HCT116 (cell line): ENCODE measurements at regions of chr18 and their contacts with region 1.

Region 1: GRCh38 chr18:8654503-8655451 is 45.5 kb downstream of the RAB12 start:
- DNase-seq: no peak
- ATAC-seq: peak; percentile 27; the same call in 1 of the 2 replicates
- H3K4me3 ChIP-seq: no peak overlapping the region
- H3K27ac ChIP-seq: no peak overlapping the region
- H3K4me1 ChIP-seq: peaks cover 0 to 12% of the 10 kb centered on the region in 2 experiments; a peak in 2 of 4 replicates
- H3K27me3 ChIP-seq: peaks cover 3% of the 10 kb centered on the region; the same call in 1 of the 2 replicates
- CTCF ChIP-seq: peak; percentile 58 to 78 (median 61)
- POLR2A ChIP-seq: no peak
- RAD21 ChIP-seq: peak; percentile 87

Region 2: GRCh38 chr18:8681196-8681595 is 26.4 kb after region 1 on chr18:
- CTCF ChIA-PET with region 1: no interaction called
- POLR2A ChIA-PET with region 1: no interaction called
- RAD21 ChIA-PET with region 1: no interaction called
- intact Hi-C with region 1: no loop called
- DNase-seq: no peak
- ATAC-seq: no peak
- H3K4me3 ChIP-seq: no peak overlapping the region
- H3K27ac ChIP-seq: no peak overlapping the region
- H3K4me1 ChIP-seq: peaks cover 0 to 6% of the 10 kb centered on the region in 2 experiments; a peak in 1 of 4 replicates
- H3K27me3 ChIP-seq: no peaks in the 10 kb centered on the region
- CTCF ChIP-seq: no peak
- POLR2A ChIP-seq: no peak
- RAD21 ChIP-seq: no peak

Region 3: GRCh38 chr18:8816816-8817215 is 162.0 kb after region 1 on chr18:
- CTCF ChIA-PET with region 1: no interaction called
- POLR2A ChIA-PET with region 1: no interaction called
- RAD21 ChIA-PET with region 1: no interaction called
- intact Hi-C with region 1: no loop called
- DNase-seq: no peak
- ATAC-seq: no peak
- H3K4me3 ChIP-seq: no peak overlapping the region
- H3K27ac ChIP-seq: no peak overlapping the region
- H3K4me1 ChIP-seq: no peaks in the 10 kb centered on the region
- H3K27me3 ChIP-seq: no peaks in the 10 kb centered on the region
- CTCF ChIP-seq: no peak
- POLR2A ChIP-seq: no peak
- RAD21 ChIP-seq: no peak

Region 4: GRCh38 chr18:8982416-8983184 is 327.8 kb after region 1 on chr18:
- CTCF ChIA-PET with region 1: interaction called, 38 read pairs
- POLR2A ChIA-PET with region 1: interaction called, 3 read pairs
- RAD21 ChIA-PET with region 1: interaction called, 3 read pairs
- intact Hi-C with region 1: loop called (anchors 1 kb)
- DNase-seq: peak; percentile 63
- ATAC-seq: peak; percentile 97
- H3K4me3 ChIP-seq: no peak overlapping the region
- H3K27ac ChIP-seq: no peak overlapping the region
- H3K4me1 ChIP-seq: peaks cover 0 to 9% of the 10 kb centered on the region in 2 experiments; a peak in 2 of 4 replicates
- H3K27me3 ChIP-seq: no peaks in the 10 kb centered on the region
- CTCF ChIP-seq: peak; percentile 55 to 82 (median 82)
- POLR2A ChIP-seq: no peak
- RAD21 ChIP-seq: peak; percentile 91

Region 5: DNA sequence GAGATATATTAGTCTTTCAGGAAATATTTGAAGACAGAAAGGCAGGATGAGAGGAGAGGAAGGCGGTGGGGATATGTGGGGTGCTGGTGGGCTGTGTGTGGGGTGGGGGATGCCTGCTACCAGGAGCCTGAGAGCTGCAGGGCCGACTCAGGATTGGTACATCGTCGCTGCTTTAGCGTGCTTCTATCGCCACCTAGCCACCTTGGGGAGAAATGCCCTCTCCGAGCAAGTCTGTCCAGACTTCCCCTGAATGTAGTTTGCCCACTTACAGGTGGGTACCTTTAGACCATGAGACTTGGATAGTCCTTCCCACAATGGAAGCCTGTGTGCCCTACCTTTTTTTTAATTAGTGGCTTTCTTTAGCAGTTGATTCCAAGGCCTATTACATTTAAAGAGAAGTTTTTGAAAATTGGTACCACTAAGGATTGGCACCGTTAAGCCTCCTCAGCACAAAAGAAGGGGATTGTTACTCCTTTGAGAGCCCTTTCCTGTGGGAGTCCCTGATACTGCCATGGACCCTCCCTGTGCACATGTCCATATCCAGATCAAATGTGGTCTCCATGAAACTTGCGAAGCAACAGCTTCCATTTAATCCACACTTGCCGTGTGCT is 333.6 kb after region 1 on chr18:
- CTCF ChIA-PET with region 1: interaction called, 38 read pairs
- POLR2A ChIA-PET with region 1: no interaction called
- RAD21 ChIA-PET with region 1: interaction called, 3 read pairs
- intact Hi-C with region 1: no loop called
- DNase-seq: peak; percentile 52
- ATAC-seq: peak; percentile 96
- H3K4me3 ChIP-seq: no peak overlapping the region
- H3K27ac ChIP-seq: no peak overlapping the region
- H3K4me1 ChIP-seq: peaks cover 0 to 23% of the 10 kb centered on the region in 2 experiments; a peak in 3 of 4 replicates
- H3K27me3 ChIP-seq: no peaks in the 10 kb centered on the region
- CTCF ChIP-seq: peak; percentile 62 to 86 (median 81); a peak in 5 of 6 replicates
- POLR2A ChIP-seq: no peak
- RAD21 ChIP-seq: peak; percentile 84

Region 6: GRCh38 chr18:9055185-9055584 is 400.4 kb after region 1 on chr18:
- CTCF ChIA-PET with region 1: no interaction called
- POLR2A ChIA-PET with region 1: no interaction called
- RAD21 ChIA-PET with region 1: no interaction called
- intact Hi-C with region 1: loop called (anchors 10 kb)
- DNase-seq: peak; percentile 40
- ATAC-seq: peak; percentile 70
- H3K4me3 ChIP-seq: no peak overlapping the region
- H3K27ac ChIP-seq: no peak overlapping the region
- H3K4me1 ChIP-seq: peaks cover 5 to 14% of the 10 kb centered on the region in 2 experiments; a peak in 3 of 4 replicates
- H3K27me3 ChIP-seq: no peaks in the 10 kb centered on the region
- CTCF ChIP-seq: peak in 2 of 3 experiments; percentile 45 to 49; a peak in 3 of 6 replicates
- POLR2A ChIP-seq: no peak
- RAD21 ChIP-seq: peak; percentile 73

Region 7: DNA sequence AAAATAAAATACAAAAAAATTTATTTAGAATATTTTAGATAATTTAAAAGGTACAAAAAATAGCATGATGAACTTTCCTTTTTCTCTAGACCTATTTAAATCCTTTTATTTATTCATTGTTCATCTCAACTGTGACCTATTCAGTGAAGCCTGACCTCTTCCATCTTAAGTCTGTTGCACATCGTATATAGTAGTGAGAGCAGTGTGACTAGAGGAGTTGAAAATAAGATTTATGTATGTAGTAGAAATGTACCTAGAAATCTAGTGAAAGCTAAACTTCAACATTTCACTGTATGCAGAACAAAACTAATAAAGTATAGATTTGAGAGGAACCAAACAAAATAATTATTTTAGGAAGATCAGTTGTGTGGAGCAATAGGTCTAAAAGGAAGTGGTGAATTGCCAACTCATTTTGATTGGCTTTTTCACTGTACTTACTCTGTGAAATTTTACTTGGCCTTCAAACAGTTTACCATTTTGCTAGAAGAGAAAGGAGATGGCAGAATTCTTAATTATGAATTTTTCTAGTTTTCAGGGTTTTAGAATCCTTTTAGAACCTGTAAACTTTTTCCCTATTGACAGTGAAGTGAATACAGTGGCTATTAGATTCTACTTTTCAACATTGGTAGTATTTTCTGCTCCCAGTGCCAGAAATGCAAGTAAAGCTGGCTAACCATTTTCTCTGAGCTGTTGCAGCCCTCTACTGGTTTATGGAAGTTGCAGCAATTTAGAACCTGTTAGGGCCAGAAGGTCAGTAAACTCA is 492.8 kb after region 1 on chr18:
- CTCF ChIA-PET with region 1: no interaction called
- POLR2A ChIA-PET with region 1: no interaction called
- RAD21 ChIA-PET with region 1: no interaction called
- intact Hi-C with region 1: loop called (anchors 5 kb)
- DNase-seq: peak; percentile 48
- ATAC-seq: peak; percentile 89
- H3K4me3 ChIP-seq: no peak overlapping the region
- H3K27ac ChIP-seq: no peak overlapping the region
- H3K4me1 ChIP-seq: peaks cover 0 to 5% of the 10 kb centered on the region in 2 experiments; a peak in 2 of 4 replicates
- H3K27me3 ChIP-seq: no peaks in the 10 kb centered on the region
- CTCF ChIP-seq: peak; percentile 63 to 71 (median 69); a peak in 5 of 6 replicates
- POLR2A ChIP-seq: no peak
- RAD21 ChIP-seq: peak; percentile 85